Vagina (tissue), 2 donors: ENCODE measurements at regions of chr4 and their contacts with region 1.

Region 1: DNA sequence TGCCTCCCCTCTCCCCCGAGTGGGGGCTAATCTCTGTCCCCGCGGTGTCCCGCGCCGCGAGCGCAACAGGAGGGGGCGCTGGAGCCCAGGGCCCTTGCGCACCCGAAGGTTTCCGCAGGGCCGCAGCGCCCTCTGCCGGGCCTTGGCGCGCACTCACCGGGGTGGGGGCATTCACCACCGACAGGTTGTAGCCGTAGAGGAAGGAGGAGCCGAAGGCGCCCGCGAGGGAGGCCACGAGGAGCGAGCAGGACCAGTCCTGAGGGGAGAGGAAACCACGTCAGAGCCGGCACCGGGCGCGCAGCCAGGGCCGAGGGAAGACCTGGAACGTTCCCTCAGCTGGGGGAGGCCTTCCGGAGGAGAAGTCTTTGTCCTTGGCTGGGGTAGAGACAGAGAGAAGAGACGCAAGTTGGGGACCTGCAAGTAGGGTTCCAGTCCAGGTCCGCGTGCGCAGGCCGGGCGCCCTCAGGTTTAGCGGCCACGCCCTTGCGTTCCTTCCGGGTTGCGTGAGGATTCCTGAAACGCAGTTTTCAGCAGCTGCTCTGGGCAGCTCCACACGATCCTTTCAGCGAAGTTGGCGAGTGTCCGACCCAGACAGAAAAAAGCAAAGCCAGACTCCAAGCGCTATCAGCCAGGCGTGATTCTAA is 2.4 kb downstream of the SLC2A9 start:
- DNase-seq: peak in 1 of 2 donors; percentile 99
- H3K4me3 ChIP-seq: peak overlapping the region; percentile 42 to 43
- H3K27ac ChIP-seq: peak overlapping the region; percentile 91
- H3K4me1 ChIP-seq: peaks cover 51% of the 10 kb centered on the region
- H3K27me3 ChIP-seq: no peaks in the 10 kb centered on the region
- CTCF ChIP-seq: peak; percentile 94 to 99 (median 98)
- POLR2A ChIP-seq: peak in 1 of 2 donors; percentile 17

Region 2: DNA sequence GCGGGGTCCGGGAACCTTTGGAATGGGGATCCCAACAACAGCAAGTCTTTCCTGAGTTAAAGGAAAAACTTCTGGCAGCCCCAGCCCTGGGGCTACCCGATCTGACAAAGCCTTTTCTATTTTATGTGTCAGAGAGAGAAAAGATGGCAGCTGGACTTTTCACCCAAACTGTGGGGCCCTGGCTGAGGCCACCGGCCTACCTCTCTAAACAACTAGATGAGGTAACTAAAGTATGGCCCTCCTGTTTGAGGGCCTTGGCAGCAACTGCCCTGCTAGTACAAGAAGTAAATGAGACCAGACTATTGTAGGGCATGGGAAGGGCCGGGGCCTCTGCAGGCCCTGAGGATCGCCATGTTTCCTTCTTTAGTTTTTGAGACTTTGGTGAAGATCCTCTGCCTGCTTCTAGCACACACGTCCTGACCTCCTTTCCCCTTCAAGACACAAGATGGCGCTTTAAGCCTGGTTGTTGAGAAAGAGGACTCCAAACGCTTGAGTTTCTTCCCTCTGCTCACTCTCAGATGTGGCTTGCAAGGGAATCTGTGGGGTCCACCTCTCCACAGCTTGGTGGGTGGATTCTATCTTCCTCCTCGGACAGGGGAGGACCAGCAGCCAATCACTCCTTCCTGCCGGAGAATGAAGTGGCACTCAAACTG is 256.0 kb before region 1 on chr4:
- intact Hi-C with region 1: loop called (anchors 10 kb)
- DNase-seq: no peak
- H3K4me3 ChIP-seq: no peak overlapping the region
- H3K27ac ChIP-seq: no peak overlapping the region
- H3K4me1 ChIP-seq: no peaks in the 10 kb centered on the region
- H3K27me3 ChIP-seq: no peaks in the 10 kb centered on the region
- CTCF ChIP-seq: peak; percentile 52 to 75 (median 61)
- POLR2A ChIP-seq: no peak

Region 3: GRCh38 chr4:9964879-9965278 is 54.1 kb before region 1 on chr4:
- intact Hi-C with region 1: loop called (anchors 2 kb)
- DNase-seq: peak in 1 of 2 donors; percentile 25
- H3K4me3 ChIP-seq: no peak overlapping the region
- H3K27ac ChIP-seq: no peak overlapping the region
- H3K4me1 ChIP-seq: no peaks in the 10 kb centered on the region
- H3K27me3 ChIP-seq: no peaks in the 10 kb centered on the region
- CTCF ChIP-seq: no peak
- POLR2A ChIP-seq: no peak

Region 4: DNA sequence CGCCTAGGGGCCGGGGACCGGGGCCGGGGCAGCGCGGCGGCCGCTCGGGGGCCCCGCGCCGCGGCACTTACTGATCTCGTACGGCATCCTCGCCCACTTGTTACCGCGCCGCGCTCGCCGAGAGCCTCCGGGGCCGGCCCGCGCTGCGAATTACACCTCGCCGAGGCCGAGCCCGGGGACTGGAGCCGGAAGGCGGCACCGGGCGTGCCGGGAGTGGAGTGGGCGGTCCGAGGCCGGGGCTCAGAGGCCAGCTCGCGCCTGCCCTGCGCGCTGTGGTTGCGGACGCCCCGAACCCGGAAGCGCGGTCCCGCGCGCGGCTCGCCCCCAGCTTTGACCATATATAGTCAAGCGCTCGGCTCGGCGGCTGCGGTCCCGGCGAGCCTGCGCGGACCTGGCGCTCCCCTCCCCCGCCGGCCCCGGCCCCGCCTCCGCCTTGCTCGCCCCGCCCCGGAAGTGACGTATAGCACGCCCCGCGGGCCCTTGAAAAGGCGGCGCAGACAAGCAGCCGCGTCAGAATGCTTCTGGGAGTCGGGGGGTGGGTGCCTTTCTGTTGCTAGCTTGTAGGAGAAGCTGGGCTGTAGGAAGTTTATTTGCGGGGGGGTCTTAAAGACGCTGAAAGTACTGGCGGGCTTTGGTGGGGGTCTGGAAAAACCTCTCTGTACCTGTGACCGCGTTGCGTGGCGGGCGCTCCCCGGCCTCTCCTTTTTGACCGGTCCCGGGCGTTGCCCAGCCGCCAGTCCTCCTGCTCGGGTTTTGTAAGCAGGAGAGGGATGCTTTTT is 97.8 kb after region 1 on chr4 and contains the start of gene WDR1:
- intact Hi-C with region 1: loop called (anchors 5 kb)
- DNase-seq: peak in 1 of 2 donors; percentile 98
- H3K4me3 ChIP-seq: peak within 1 kb of the TSS; percentile 83 to 86
- H3K27ac ChIP-seq: peak within 1 kb of the TSS; percentile 98
- H3K4me1 ChIP-seq: peaks cover 55% of the 10 kb centered on the region
- H3K27me3 ChIP-seq: no peaks in the 10 kb centered on the region
- CTCF ChIP-seq: no peak
- POLR2A ChIP-seq: peak in 1 of 2 donors; percentile 99
- total RNA-seq, gene WDR1: 159 TPM